ENCODE measurements at regions of chr10 and their contacts with region 1.

Region 1: DNA sequence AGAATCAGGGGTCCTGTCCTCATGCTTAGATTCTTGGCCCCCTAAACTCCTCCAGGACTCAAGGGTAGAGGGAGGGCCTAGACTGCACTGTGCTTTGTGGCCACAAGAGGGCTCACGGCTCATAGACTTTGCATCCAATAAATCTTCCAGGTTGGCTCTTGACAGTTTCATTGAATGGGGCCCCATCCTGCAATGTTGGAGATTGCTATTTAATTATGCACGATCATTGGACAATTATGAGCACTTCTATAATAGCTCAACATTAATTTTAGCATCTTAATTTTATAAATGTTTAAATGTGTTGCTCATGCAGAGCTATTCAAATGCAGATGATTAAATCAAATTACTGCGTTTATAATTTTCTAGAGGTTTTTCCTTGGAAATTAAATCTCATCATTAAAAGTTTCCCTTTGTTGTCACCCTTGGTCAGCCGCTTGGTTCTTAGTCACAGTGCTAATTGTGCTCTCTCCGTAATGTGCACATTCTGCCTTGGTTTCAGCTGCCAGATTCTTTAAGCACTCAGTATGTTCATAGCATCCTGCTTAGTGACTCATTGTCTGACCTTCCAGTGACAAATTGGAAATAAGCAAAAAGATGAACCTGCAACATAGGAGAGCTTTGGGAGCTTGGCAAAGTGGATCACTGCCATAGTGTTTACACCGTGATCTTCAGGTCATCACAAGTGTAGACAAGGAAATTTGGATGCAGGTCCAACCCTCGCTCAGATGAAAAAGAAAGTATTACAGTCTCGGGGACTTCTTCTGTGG is 33.4 kb upstream of the PLPP4 start:
- DNase-seq: peak in 2 of 3 donors; percentile 43 to 49
- ATAC-seq: peak; percentile 80 to 86 (median 82)
- H3K4me3 ChIP-seq: no peak overlapping the region
- H3K27ac ChIP-seq: no peak overlapping the region
- H3K4me1 ChIP-seq: no peaks in the 10 kb centered on the region
- H3K27me3 ChIP-seq: no peaks in the 10 kb centered on the region
- CTCF ChIP-seq: peak; percentile 55 to 89 (median 86)
- POLR2A ChIP-seq: no peak

Region 2: DNA sequence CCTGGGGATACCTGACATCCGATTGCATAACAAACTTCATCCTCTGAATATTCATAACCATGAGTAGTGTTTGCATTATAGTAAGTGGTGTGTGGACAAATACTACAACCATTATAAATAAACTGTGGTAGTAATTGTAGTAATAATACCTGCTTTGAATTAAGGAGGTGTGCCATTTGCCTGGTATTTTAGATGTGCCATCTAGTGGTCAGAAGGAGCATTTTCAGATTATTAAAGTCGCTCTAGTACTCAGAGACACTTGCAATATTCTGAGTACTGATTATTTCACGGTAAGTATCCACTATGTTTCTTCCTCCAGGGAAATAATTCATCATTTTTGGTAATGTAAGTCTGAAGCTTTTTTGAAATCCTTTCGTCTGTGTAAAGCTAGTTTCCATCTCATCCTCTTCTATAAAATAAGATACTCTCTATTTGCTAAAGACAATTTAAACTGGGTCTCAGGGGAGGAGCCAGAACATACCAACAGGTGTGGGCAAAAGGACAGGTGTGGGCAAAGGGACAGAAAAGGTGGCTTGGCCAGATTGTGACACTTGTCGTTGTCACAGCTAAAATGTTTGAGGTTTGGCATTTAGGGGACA is 312.3 kb after region 1 on chr10:
- intact Hi-C with region 1: loop called (anchors 5 to 10 kb)
- DNase-seq: no peak
- ATAC-seq: peak; percentile 60 to 74 (median 69)
- H3K4me3 ChIP-seq: no peak overlapping the region
- H3K27ac ChIP-seq: no peak overlapping the region
- H3K4me1 ChIP-seq: no peaks in the 10 kb centered on the region
- H3K27me3 ChIP-seq: no peaks in the 10 kb centered on the region
- CTCF ChIP-seq: peak; percentile 57 to 75 (median 68)
- POLR2A ChIP-seq: no peak

Measured in right lobe of liver (tissue), 6 donors.